ENCODE measurements at regions of chr4 and their contacts with region 1.

Region 1: DNA sequence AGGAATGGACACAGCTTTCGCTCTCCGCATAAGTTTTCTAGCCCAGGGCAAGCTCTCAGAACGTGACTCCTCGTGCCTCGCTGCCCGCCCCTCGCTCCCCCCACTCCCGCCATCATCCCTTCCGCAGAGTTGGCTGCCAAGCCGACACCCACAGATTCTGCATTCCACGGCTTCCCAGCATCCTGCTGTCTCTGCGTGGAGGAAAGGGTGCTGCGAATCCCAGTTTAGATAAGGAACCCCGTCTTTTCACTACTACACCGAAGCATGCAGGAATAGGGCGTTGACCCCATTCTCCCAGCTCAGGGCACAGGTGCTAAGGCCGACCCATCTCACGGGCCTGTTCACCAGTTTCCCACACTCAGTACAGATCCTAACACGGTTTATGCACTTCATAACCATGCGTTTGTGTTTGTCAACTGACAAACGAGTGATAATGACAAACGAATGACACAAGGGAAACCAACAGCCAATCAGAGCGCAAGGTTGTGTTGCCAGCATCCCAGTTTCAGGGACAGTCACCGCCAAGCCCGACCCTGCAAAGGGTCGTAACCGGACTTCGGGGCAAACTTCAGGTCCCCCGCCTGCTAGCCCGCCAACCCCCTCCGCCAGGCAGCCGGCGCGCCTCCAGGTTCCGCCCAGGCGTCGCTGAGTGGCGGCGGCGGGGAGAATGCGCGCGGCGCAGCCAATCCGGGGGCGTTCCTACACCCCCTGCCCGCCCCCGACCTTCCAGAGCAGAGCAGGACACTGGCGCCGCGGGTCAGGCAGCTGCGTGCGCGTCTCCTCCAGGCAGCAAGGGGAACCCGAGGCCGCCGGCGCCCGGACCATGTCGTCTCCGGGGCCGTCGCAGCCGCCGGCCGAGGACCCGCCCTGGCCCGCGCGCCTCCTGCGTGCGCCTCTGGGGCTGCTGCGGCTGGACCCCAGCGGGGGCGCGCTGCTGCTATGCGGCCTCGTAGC is at the start of gene CYP2U1:
- DNase-seq: peak; percentile 70
- ATAC-seq: peak; percentile 97
- H3K4me3 ChIP-seq: peak within 1 kb of the TSS; percentile 67
- H3K27ac ChIP-seq: no peak within 1 kb of the TSS
- H3K4me1 ChIP-seq: peaks cover 13% of the 10 kb centered on the region; the same call in 1 of the 2 replicates
- H3K27me3 ChIP-seq: no peaks in the 10 kb centered on the region
- CTCF ChIP-seq: no peak
- total RNA-seq, gene CYP2U1: 4.1 and 4.4 TPM in 2 replicates

Region 2: DNA sequence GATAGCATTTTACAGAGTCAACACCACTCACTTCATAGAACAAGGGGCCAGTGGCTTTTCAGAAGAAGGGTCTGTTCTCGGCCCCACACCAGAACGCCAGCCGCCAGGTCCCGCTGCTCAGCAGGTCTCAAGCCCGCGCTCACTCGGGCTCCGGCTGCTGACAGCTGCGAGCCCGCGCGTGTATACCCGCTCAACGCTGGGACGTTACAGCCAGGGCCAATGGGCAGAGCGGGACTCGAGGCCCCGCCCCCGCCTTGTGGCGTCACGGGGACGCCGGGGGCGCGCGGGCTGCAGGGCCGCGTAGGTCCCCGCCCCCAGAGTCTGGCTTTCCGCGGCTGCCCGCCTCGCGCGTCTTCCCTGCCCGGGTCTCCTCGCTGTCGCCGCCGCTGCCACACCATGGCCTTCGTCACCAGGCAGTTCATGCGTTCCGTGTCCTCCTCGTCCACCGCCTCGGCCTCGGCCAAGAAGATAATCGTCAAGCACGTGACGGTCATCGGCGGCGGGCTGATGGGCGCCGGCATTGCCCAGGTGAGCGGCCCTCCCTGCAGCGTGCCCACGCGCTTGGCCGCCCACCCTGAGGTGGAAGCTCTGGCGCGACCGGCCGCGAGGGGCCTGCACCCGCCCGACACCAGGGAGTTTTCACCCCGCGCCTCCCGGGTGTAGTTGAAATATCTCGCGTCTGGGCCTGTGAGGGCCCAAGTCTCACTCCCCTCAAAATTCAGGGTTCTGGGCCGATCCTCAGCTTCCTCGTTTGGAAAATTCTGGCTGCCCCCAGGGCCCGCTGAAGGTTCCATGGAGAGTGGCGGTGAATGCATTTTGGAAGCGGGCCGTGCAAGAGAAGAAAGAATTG is 58.7 kb after region 1 on chr4 and contains the start of gene HADH:
- CTCF ChIA-PET with region 1: no interaction called
- POLR2A ChIA-PET with region 1: no interaction called
- intact Hi-C with region 1: loop called (anchors 2 kb)
- DNase-seq: peak; percentile 92
- ATAC-seq: peak; percentile 98
- H3K4me3 ChIP-seq: peak within 1 kb of the TSS; percentile 98
- H3K27ac ChIP-seq: peak within 1 kb of the TSS; percentile 25
- H3K4me1 ChIP-seq: peaks cover 20% of the 10 kb centered on the region
- H3K27me3 ChIP-seq: no peaks in the 10 kb centered on the region
- CTCF ChIP-seq: no peak
- total RNA-seq, gene HADH: 10.8 and 17.5 TPM in 2 replicates